ENCODE measurements at regions of chrX and their contacts with region 1.

Region 1: DNA sequence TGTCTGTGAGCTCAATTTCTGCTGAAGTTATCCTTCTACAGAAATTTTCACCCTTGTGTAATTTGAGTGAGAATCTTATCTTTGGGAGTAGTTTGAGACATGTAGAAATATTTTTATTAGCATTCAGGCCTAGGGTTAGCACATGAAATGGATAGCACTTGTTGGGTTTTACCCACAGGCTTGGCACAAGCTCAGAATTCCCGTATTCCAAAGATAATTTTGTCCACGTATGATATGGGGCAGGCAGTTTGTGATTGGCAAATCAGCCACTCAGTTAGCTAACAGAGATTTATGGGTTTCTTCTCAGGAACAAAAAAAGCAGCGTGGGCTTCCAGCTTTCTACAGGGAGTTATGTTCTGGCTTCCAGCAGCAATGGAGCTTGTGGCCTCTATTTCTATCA is 117.9 kb upstream of the DCAF8L1 start:
- DNase-seq: no peak
- ATAC-seq: no peak
- H3K4me3 ChIP-seq: no peak overlapping the region
- H3K4me3 Mint-ChIP-seq: no peak overlapping the region
- H3K27ac ChIP-seq: no peak overlapping the region
- H3K27ac Mint-ChIP-seq: no peak overlapping the region
- H3K4me1 ChIP-seq: no peaks in the 10 kb centered on the region
- H3K4me1 Mint-ChIP-seq: no peaks in the 10 kb centered on the region
- H3K27me3 ChIP-seq: no peaks in the 10 kb centered on the region
- H3K27me3 Mint-ChIP-seq: no peaks in the 10 kb centered on the region
- CTCF ChIP-seq: no peak

Region 2: DNA sequence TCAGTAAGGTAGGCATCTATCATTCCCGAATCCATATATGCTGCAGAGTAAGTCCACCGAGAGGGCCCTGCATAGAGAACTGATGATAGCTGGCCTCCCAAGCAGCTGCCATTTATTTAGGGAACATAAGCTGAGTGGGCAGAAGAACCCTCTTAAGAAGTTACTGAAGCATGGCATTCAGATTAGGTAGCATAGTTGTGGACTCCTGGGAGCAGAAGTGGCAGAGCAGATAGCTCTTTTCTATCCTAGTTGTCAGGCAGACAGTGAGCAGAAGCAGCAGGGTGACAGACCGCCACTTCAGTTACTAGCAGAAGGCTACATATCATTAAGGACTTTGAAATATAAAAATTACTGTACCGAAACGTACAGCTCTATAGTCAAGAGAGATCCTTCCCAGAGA is 1090.7 kb before region 1 on chrX:
- CTCF ChIA-PET with region 1: no interaction called
- POLR2A ChIA-PET with region 1: no interaction called
- intact Hi-C with region 1: loop called (anchors 10 kb)
- DNase-seq: no peak
- ATAC-seq: no peak
- H3K4me3 ChIP-seq: no peak overlapping the region
- H3K4me3 Mint-ChIP-seq: no peak overlapping the region
- H3K27ac ChIP-seq: no peak overlapping the region
- H3K27ac Mint-ChIP-seq: no peak overlapping the region
- H3K4me1 ChIP-seq: no peaks in the 10 kb centered on the region
- H3K4me1 Mint-ChIP-seq: no peaks in the 10 kb centered on the region
- H3K27me3 ChIP-seq: no peaks in the 10 kb centered on the region
- H3K27me3 Mint-ChIP-seq: no peaks in the 10 kb centered on the region
- CTCF ChIP-seq: no peak

Region 3: DNA sequence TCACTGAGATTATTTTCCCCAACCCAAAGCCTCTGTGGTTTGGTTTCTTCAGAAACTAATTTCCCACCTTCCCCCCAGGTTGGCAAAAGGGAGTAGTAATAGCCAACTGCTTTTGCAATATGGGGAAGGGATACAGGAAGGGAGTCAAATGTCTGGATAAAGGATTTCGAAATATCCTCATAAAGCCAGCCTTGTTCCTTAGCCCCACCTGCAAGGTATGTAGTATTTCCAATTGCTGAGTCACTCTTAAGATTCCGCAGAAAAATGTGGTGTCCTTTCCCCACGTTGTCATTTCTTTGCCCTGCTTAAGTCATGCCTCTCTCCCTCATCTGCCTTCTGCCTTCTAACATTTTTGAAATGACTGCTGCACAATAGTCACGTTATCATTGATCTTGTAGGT is 20.9 kb after region 1 on chrX:
- CTCF ChIA-PET with region 1: no interaction called
- POLR2A ChIA-PET with region 1: no interaction called
- intact Hi-C with region 1: no loop called
- DNase-seq: no peak
- ATAC-seq: no peak
- H3K4me3 ChIP-seq: no peak overlapping the region
- H3K4me3 Mint-ChIP-seq: no peak overlapping the region
- H3K27ac ChIP-seq: no peak overlapping the region
- H3K27ac Mint-ChIP-seq: no peak overlapping the region
- H3K4me1 ChIP-seq: no peaks in the 10 kb centered on the region
- H3K4me1 Mint-ChIP-seq: no peaks in the 10 kb centered on the region
- H3K27me3 ChIP-seq: no peaks in the 10 kb centered on the region
- H3K27me3 Mint-ChIP-seq: no peaks in the 10 kb centered on the region
- CTCF ChIP-seq: no peak